A549 (cell line): ENCODE measurements at regions of chr6 and their contacts with region 1.

Region 1: GRCh38 chr6:107847844-107848802 is 24.0 kb upstream of the SCML4 start:
- DNase-seq: peak; percentile 69 to 70
- ATAC-seq: peak; percentile 96 to 99
- H3K4me3 ChIP-seq: peak overlapping the region; percentile 54
- H3K27ac ChIP-seq: peak overlapping the region; percentile 72 to 76
- H3K4me1 ChIP-seq: no peaks in the 10 kb centered on the region
- CTCF ChIP-seq: peak; percentile 79
- EP300 ChIP-seq: no peak
- POLR2A ChIP-seq: peak; percentile 29; the same call in 1 of the 2 replicates
- RAD21 ChIP-seq: peak; percentile 60 to 78

Region 2: GRCh38 chr6:107674995-107675738 is 173.0 kb before region 1 on chr6:
- CTCF ChIA-PET with region 1: interaction called, 29 read pairs
- POLR2A ChIA-PET with region 1: no interaction called
- DNase-seq: peak; percentile 78 to 79
- ATAC-seq: peak; percentile 99 to 100
- H3K4me3 ChIP-seq: no peak overlapping the region
- H3K27ac ChIP-seq: peak overlapping the region; percentile 54 to 86; a peak in 5 of 6 replicates
- H3K4me1 ChIP-seq: no peaks in the 10 kb centered on the region
- CTCF ChIP-seq: peak; percentile 88
- EP300 ChIP-seq: no peak
- POLR2A ChIP-seq: no peak
- RAD21 ChIP-seq: peak; percentile 79 to 86

Region 3: DNA sequence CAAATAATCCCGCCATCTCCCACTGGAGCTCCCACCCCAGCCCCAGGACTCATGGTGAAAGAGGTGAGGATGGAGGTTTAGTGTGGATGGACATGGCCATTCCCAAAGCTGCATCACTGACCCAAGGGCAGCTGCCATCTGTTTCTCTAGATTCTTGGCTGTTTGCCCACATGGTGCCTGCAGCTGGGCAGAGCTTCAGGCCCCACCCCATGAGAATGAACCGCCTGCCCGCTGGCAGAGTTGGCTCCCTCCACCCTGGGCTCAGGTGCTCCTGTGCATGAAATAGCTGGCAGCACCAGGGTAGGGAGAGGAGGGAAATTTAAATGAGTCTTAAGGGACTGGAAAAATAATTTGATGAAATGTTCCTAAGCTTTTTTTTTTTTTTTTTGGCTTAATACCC is 41.4 kb before region 1 on chr6:
- CTCF ChIA-PET with region 1: interaction called, 13 read pairs
- POLR2A ChIA-PET with region 1: no interaction called
- DNase-seq: no peak
- ATAC-seq: no peak
- H3K4me3 ChIP-seq: no peak overlapping the region
- H3K27ac ChIP-seq: no peak overlapping the region
- H3K4me1 ChIP-seq: no peaks in the 10 kb centered on the region
- CTCF ChIP-seq: no peak
- EP300 ChIP-seq: no peak
- POLR2A ChIP-seq: no peak
- RAD21 ChIP-seq: no peak

Region 4: GRCh38 chr6:107813555-107814194 is 34.4 kb before region 1 on chr6:
- CTCF ChIA-PET with region 1: interaction called, 14 read pairs
- POLR2A ChIA-PET with region 1: no interaction called
- DNase-seq: no peak
- ATAC-seq: no peak
- H3K4me3 ChIP-seq: no peak overlapping the region
- H3K27ac ChIP-seq: no peak overlapping the region
- H3K4me1 ChIP-seq: no peaks in the 10 kb centered on the region
- CTCF ChIP-seq: no peak
- EP300 ChIP-seq: no peak
- POLR2A ChIP-seq: no peak
- RAD21 ChIP-seq: no peak

Region 5: GRCh38 chr6:107832151-107833056 is 15.7 kb before region 1 on chr6:
- CTCF ChIA-PET with region 1: interaction called, 36 read pairs
- POLR2A ChIA-PET with region 1: no interaction called
- DNase-seq: no peak
- ATAC-seq: no peak
- H3K4me3 ChIP-seq: no peak overlapping the region
- H3K27ac ChIP-seq: no peak overlapping the region
- H3K4me1 ChIP-seq: no peaks in the 10 kb centered on the region
- CTCF ChIP-seq: no peak
- EP300 ChIP-seq: no peak
- POLR2A ChIP-seq: no peak
- RAD21 ChIP-seq: no peak

Region 6: GRCh38 chr6:107866606-107867301 is 18.6 kb after region 1 on chr6:
- CTCF ChIA-PET with region 1: interaction called, 18 read pairs
- POLR2A ChIA-PET with region 1: no interaction called
- DNase-seq: peak in 1 of 2 experiments; percentile 18
- ATAC-seq: peak; percentile 35 to 77; a peak in 3 of 6 replicates
- H3K4me3 ChIP-seq: no peak overlapping the region
- H3K27ac ChIP-seq: no peak overlapping the region
- H3K4me1 ChIP-seq: 0 out of 3 replicates have a peak, but pooled peaks cover 6% of the 10 kb centered on the region
- CTCF ChIP-seq: peak; percentile 46
- EP300 ChIP-seq: no peak
- POLR2A ChIP-seq: no peak
- RAD21 ChIP-seq: peak; percentile 19 to 24; a peak in 2 of 5 replicates